Heart left ventricle (tissue), 16 donors: ENCODE measurements at regions of chr13 and their contacts with region 1.

Region 1: DNA sequence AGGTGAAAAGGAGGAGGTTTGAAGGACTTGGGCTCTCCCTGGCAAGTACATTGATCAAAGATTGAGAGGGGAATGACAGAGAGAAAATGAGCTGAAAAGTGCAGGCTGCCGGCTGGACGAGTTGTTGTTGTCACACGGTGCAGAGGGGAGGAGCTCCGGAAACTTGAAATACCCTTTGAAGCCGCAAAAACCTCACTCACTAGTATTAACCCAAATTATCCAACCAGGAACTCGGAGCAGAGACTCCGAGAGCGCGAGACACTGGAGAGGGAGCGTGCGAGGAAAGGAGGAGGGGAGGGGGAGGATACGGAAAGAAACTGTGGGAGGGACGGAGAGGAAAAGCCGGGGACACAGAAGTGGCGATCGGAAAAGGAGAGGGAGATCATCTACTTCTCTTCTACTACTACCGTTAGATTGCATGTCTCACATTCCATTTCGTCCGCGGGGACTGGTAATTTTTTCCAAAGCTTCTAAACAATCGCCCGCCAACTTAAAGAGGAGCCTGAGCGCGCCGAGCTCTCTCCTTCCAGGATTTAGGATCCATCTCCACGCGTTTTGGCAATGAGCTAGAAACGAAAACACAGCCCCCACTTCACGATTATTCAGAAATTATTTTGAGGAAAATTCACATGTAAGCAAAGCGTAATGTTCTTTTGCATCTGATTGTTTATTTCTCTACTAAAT is at the start of gene DACH1:
- DNase-seq: peak; percentile 56 to 70 (median 68)
- ATAC-seq: peak; percentile 68 to 82 (median 80)
- H3K4me3 ChIP-seq: peak within 1 kb of the TSS; percentile 62 to 90 (median 76)
- H3K27ac ChIP-seq: peak within 1 kb of the TSS in 11 of 12 donors; percentile 56 to 88 (median 76)
- H3K4me1 ChIP-seq: peaks cover 0 to 20% (median 5%) of the 10 kb centered on the region in 12 donors
- H3K27me3 ChIP-seq: peaks cover 0 to 26% (median 8%) of the 10 kb centered on the region in 9 donors
- CTCF ChIP-seq: no peak
- POLR2A ChIP-seq: no peak
- total RNA-seq, gene DACH1: 1.2 to 3.8 (median 2.2) TPM

Region 2: DNA sequence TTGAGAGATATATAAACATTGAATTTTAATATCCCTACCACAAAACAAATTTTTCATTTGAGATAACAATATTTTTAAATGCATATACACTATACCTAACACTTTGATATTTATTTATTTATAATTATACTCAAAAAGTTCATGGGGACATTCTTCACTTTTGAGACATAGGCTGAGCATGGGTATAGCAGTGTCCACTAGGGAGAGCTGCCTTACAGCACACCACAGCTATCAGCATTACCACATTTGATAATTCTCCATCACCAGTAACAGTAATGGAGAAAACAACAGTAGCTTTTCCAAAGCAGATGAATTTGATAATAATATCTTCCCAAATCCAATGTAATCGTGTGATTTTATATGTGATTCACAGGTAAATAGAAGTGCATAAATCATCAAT is 626.4 kb before region 1 on chr13:
- intact Hi-C with region 1: loop called in 1 of 10 experiments (anchors 10 kb)
- DNase-seq: no peak
- ATAC-seq: peak in 3 of 4 donors; percentile 50 to 66 (median 61)
- H3K4me3 ChIP-seq: no peak overlapping the region
- H3K27ac ChIP-seq: no peak overlapping the region
- H3K4me1 ChIP-seq: peaks cover 0 to 18% (median 3%) of the 10 kb centered on the region in 12 donors
- H3K27me3 ChIP-seq: no peaks in the 10 kb centered on the region
- CTCF ChIP-seq: peak in 11 of 12 donors; percentile 28 to 62 (median 43)
- POLR2A ChIP-seq: no peak

Region 3: GRCh38 chr13:71460211-71460610 is 407.1 kb before region 1 on chr13:
- intact Hi-C with region 1: loop called in 2 of 10 experiments (anchors 10 kb)
- DNase-seq: no peak
- ATAC-seq: no peak
- H3K4me3 ChIP-seq: no peak overlapping the region
- H3K27ac ChIP-seq: no peak overlapping the region
- H3K4me1 ChIP-seq: peaks cover 0 to 11% (median 0%) of the 10 kb centered on the region in 12 donors
- H3K27me3 ChIP-seq: no peaks in the 10 kb centered on the region
- CTCF ChIP-seq: no peak
- POLR2A ChIP-seq: no peak

Region 4: GRCh38 chr13:71712988-71713653 is 154.2 kb before region 1 on chr13:
- intact Hi-C with region 1: loop called in 2 of 10 experiments (anchors 10 kb)
- DNase-seq: peak in 3 of 5 donors; percentile 25 to 31 (median 26)
- ATAC-seq: peak; percentile 45 to 90 (median 70)
- H3K4me3 ChIP-seq: no peak overlapping the region
- H3K27ac ChIP-seq: peak overlapping the region in 3 of 12 donors; percentile 6 to 35 (median 15)
- H3K4me1 ChIP-seq: peaks cover 0 to 21% (median 0%) of the 10 kb centered on the region in 12 donors
- H3K27me3 ChIP-seq: no peaks in the 10 kb centered on the region
- CTCF ChIP-seq: no peak
- POLR2A ChIP-seq: no peak

Region 5: GRCh38 chr13:71770710-71771109 is 96.6 kb before region 1 on chr13:
- intact Hi-C with region 1: loop called in 1 of 10 experiments (anchors 10 kb)
- DNase-seq: no peak
- ATAC-seq: no peak
- H3K4me3 ChIP-seq: no peak overlapping the region
- H3K27ac ChIP-seq: no peak overlapping the region
- H3K4me1 ChIP-seq: peaks cover 0 to 7% (median 0%) of the 10 kb centered on the region in 12 donors
- H3K27me3 ChIP-seq: no peaks in the 10 kb centered on the region
- CTCF ChIP-seq: no peak
- POLR2A ChIP-seq: no peak

Region 6: DNA sequence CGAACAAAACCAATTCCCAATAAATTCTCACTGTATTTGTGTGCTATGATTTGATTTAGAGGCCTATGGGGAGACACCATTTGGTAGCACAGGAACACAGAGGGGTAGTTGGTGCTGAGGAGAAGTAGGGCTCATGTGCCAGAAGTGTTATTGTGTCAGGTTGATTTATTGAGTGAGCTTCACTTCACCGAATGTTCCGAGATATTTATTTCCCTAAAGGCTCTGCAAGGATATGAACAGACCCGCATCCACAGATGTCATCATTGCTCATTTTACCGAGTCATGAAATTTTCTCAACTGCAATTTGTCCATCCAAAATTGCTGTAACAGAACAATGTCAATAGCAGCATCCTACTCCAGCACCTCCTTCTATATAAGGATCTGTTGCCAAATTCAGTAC is 69.8 kb before region 1 on chr13:
- intact Hi-C with region 1: loop called in 1 of 10 experiments (anchors 10 kb)
- DNase-seq: no peak
- ATAC-seq: no peak
- H3K4me3 ChIP-seq: no peak overlapping the region
- H3K27ac ChIP-seq: no peak overlapping the region
- H3K4me1 ChIP-seq: peaks cover 0 to 8% (median 0%) of the 10 kb centered on the region in 12 donors
- H3K27me3 ChIP-seq: peaks cover 0 to 3% (median 0%) of the 10 kb centered on the region in 9 donors
- CTCF ChIP-seq: no peak
- POLR2A ChIP-seq: no peak

Region 7: GRCh38 chr13:71814806-71815360 is 52.4 kb before region 1 on chr13:
- intact Hi-C with region 1: no loop called
- DNase-seq: no peak
- ATAC-seq: no peak
- H3K4me3 ChIP-seq: no peak overlapping the region
- H3K27ac ChIP-seq: no peak overlapping the region
- H3K4me1 ChIP-seq: no peaks in the 10 kb centered on the region
- H3K27me3 ChIP-seq: no peaks in the 10 kb centered on the region
- CTCF ChIP-seq: no peak
- POLR2A ChIP-seq: no peak